Right ventricle myocardium inferior (tissue), 1 donor: ENCODE measurements at regions of chrX and their contacts with region 1.

Region 1: DNA sequence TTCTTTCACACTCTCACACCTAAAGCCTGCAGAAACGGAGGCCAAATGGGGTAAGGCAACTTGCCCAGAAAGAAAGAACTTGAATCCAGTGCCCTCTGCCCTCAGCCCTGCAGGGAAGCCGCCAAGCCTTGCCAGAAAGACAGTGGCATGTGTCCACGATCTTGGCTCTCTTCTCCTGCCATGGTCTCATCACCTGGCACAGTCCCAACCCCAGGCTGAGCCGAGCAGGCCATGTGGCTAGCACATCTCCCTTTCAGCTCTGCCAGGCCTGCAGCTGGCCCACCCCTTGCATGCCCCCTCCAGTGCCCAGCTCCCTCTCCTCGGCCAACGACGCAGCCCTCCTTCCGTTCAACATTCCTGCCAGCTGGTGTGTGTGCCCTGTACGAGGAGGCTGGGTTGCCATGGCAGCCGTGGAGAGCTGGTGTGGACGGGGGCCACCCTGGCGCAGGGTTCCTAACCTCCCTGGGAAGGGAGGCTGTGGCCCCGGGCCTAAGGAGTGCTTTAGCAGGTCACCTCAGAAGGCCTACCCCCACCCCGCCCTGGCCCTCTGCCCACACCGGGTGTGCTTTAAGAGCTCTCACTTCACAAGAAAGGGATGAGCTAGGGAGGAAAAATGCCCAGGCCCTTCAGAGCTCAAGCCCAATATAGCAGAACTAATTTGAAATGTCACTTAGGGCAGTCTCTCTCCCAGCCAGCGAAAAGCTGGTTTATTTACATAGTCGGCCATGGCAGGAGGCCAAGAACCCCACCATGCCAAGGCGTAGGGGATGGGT is 73.0 kb upstream of the PJA1 start:
- DNase-seq: no peak
- ATAC-seq: peak; percentile 63

Region 2: GRCh38 chrX:69280933-69281332 is 42.6 kb after region 1 on chrX:
- intact Hi-C with region 1: loop called (anchors 5 kb)
- DNase-seq: no peak
- ATAC-seq: peak; percentile 65

Region 3: GRCh38 chrX:69387567-69388487 is 149.5 kb after region 1 on chrX:
- intact Hi-C with region 1: loop called (anchors 10 kb)
- DNase-seq: peak; percentile 68
- ATAC-seq: peak; percentile 54

Region 4: DNA sequence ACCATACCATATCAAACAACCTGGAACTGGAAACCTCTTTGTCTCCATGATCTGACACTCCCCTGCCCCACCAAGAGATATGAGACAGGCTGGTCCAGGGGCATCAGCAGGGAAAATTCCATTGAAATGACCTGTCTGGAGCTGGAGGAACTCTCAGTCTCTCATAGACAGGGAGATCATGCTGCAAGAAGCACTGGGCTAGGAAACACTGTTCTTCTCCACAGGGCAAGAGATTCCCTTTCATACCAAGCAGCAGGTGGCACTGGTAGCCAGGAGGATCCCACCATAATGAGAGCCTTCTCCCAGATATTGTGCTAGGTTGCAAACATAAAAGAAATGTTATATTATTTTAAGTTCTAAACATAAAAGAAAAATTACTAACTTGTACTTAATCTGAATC is 251.3 kb after region 1 on chrX:
- intact Hi-C with region 1: no loop called
- DNase-seq: no peak
- ATAC-seq: no peak